ENCODE measurements at regions of chr19 and their contacts with region 1.

Region 1: DNA sequence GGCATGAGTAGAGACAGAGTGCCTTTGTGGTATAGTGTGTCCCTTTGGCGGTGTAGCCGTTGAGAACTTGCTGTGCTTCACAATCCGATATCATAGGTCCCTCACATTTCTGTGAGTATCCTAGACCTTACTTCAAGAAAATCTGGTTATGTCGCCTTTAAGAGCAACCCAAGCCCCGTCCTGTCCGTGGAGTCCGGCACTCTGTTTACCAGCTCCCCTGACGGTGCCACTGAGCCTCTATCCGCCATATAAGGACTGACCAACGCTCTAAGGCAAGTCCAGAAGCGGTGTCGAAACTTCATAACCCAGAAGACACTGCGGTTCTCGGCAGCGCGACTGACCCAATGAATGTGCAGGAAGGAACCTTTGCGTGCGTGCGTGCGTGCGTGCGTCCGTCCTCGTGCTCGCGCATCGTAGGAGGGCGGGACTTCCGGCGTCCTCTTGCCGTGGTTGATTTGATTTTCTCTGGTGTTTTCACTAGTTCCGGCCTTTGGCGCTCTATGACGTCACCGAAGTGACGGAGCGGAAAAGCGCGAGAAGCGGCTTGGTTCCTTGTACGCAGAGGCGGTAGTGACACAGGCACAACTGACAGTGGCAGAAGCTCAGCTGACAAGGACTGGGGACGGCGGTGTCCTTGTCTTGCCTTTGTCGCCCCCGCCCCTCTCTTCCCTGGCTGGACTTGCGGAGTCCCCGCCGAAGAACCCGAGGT is at the starts of genes TRAPPC2B and ZNF547:
- DNase-seq: peak; percentile 99 to 100
- ATAC-seq: peak; percentile 88 to 96 (median 90)
- H3K4me3 ChIP-seq: peak within 1 kb of the TSS; percentile 56
- H3K4me3 Mint-ChIP-seq: peak within 1 kb of the TSS; percentile 92
- H3K27ac ChIP-seq: peak within 1 kb of the TSS; percentile 93
- H3K27ac Mint-ChIP-seq: peak within 1 kb of the TSS; percentile 96 to 98
- H3K4me1 ChIP-seq: peaks cover 14% of the 10 kb centered on the region
- H3K4me1 Mint-ChIP-seq: peaks cover 18 to 19% of the 10 kb centered on the region in 2 donors
- H3K27me3 ChIP-seq: no peaks in the 10 kb centered on the region
- H3K27me3 Mint-ChIP-seq: no peaks in the 10 kb centered on the region
- CTCF ChIP-seq: no peak
- total RNA-seq, gene TRAPPC2B: 7.4 to 15.6 (median 13.7) TPM
- total RNA-seq, gene ZNF547: 0.48 to 1.2 (median 0.92) TPM

Region 2: DNA sequence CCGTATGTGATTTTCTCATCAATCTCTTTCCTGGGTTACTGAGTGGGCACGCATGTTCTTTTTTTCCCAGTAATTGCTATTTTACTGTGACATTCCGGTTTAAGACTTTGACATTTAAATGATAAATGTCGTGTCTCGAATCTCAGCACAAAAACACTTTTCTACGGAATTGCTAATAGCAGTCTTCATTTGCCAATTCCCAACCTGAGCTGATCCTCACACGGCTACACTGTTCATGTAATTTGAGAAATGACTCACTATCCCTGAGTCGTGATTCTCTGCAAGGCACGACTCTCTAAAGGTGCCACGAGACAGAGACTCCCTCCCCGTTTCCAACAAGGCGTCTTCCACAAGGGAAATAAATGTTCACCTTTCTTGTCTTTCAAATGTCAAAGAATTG is 332.0 kb before region 1 on chr19:
- intact Hi-C with region 1: no loop called
- DNase-seq: no peak
- ATAC-seq: no peak
- H3K4me3 ChIP-seq: no peak overlapping the region
- H3K4me3 Mint-ChIP-seq: no peak overlapping the region
- H3K27ac ChIP-seq: no peak overlapping the region
- H3K27ac Mint-ChIP-seq: no peak overlapping the region
- H3K4me1 ChIP-seq: no peaks in the 10 kb centered on the region
- H3K4me1 Mint-ChIP-seq: no peaks in the 10 kb centered on the region
- H3K27me3 ChIP-seq: no peaks in the 10 kb centered on the region
- H3K27me3 Mint-ChIP-seq: no peaks in the 10 kb centered on the region
- CTCF ChIP-seq: no peak

Region 3: DNA sequence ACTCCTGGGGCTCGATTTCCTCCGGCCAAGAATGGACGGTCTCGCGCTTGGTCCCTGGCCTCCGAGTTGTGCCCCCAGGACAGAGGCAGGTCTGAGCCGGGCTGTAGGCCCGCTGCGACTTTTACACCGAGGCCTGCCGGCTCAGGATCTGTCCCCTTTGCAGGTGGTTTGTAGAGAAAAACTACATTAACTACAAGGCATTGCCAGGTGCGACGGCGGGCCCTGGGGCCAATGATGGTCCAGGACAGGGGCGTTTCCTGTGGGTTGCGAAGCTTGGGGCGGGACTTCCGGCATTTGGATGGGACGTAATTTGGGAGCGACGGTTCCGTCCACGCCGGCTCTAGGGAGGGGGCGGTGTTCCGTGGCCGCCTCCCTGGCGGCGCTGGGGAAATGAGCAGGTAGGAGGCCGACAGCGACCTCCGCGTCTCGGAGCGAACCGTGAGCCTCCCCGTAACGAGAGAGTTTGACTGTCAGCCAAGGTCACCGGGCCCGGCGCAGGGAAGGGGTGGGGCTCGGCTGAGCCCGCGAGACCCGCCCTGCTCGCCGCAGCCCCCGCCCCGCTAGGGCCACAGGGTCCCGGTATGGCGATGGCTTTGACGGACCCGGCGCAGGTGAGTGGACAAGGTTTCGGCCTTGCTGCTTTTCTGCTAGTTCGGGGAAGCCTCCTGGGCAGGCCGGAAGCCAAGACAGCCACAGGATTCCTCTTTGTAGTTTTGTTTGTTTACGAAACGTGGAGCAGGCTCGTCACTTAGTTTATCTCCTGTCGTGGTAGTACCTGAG is 122.7 kb before region 1 on chr19 and contains the start of gene ZNF805:
- intact Hi-C with region 1: loop called (anchors 1 kb)
- DNase-seq: peak; percentile 89 to 98
- ATAC-seq: peak; percentile 92 to 97 (median 94)
- H3K4me3 ChIP-seq: peak within 1 kb of the TSS; percentile 78
- H3K4me3 Mint-ChIP-seq: peak within 1 kb of the TSS; percentile 95
- H3K27ac ChIP-seq: peak within 1 kb of the TSS; percentile 87
- H3K27ac Mint-ChIP-seq: peak within 1 kb of the TSS; percentile 94 to 96
- H3K4me1 ChIP-seq: peaks cover 22% of the 10 kb centered on the region
- H3K4me1 Mint-ChIP-seq: peaks cover 29 to 34% of the 10 kb centered on the region in 2 donors
- H3K27me3 ChIP-seq: no peaks in the 10 kb centered on the region
- H3K27me3 Mint-ChIP-seq: no peaks in the 10 kb centered on the region
- CTCF ChIP-seq: no peak
- total RNA-seq, gene ZNF805: 25.9 to 32.7 (median 31.0) TPM

Region 4: DNA sequence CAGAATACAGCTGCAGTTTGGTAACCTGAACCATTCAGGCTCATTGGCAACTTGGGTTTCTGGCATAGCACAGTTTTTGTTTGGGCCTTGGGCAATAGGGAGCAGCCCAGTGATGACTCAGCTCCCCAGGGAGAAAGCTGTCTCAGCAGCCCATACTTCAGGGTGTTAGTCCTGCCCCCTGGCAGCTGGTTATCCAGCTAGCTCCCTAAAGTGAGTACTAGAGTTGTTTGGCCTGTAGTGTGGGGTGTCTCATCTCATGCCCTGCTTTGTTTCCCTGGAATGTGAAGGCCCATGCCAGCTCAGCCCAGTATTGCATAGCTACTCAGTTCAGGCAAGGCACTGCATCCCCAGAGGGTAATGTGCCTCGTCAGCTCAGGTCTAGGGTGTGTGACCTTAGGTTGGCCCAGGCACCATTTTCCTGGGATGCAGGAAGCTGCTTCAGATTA is 61.1 kb before region 1 on chr19:
- intact Hi-C with region 1: no loop called
- DNase-seq: no peak
- ATAC-seq: peak in 1 of 3 donors; percentile 12
- H3K4me3 ChIP-seq: no peak overlapping the region
- H3K4me3 Mint-ChIP-seq: no peak overlapping the region
- H3K27ac ChIP-seq: no peak overlapping the region
- H3K27ac Mint-ChIP-seq: no peak overlapping the region
- H3K4me1 ChIP-seq: no peaks in the 10 kb centered on the region
- H3K4me1 Mint-ChIP-seq: peaks cover 13 to 16% of the 10 kb centered on the region in 2 donors
- H3K27me3 ChIP-seq: no peaks in the 10 kb centered on the region
- H3K27me3 Mint-ChIP-seq: no peaks in the 10 kb centered on the region
- CTCF ChIP-seq: no peak

Region 5: DNA sequence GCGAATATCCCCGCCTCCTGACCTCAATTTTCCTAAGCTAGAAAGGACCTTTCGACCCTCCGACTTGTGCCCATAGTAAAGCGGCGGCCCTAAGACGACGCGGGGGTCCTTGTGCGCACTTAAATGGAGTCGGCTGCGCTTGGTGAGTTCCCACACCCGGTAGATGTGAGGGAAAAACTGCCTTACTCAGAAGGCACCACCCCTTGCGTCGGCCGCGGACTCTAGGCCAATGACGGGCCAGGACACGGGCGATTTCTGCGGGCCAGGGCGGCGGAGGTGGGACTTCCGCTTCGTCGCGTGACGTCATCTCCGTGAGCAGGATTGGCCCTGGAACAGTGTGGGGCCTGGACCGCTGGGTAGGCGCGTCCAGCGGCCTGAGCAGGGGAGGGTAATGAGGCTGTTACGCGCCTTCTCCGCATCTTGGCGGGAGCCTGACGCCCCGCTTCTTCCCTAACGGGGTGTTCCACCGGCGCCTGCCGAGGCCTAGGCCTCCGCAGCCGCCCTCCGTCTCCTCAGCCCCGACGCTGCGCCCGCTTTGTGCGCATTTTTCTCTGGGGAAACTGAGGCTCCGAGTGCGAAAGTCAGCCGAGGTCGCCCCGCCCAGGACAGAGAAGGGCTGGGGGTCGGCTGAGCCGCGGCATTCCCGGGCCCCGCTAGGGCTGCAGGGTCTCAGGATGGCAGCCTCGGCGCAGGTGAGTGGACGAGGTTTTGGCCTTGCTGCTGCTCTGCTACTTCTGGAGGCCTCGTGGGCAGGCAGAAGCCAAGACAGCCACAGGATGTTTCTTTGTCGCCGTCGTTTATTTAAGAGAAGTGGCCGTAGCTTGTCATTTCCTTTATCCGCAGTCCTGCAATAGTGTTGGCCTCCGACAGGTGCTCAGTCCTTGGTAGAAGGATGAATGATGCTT is 42.7 kb before region 1 on chr19 and contains the start of gene ZNF543:
- intact Hi-C with region 1: no loop called
- DNase-seq: peak; percentile 94 to 96
- ATAC-seq: peak; percentile 95 to 99 (median 98)
- H3K4me3 ChIP-seq: peak within 1 kb of the TSS; percentile 81
- H3K4me3 Mint-ChIP-seq: peak within 1 kb of the TSS; percentile 94
- H3K27ac ChIP-seq: peak within 1 kb of the TSS; percentile 94
- H3K27ac Mint-ChIP-seq: peak within 1 kb of the TSS; percentile 95 to 99
- H3K4me1 ChIP-seq: peaks cover 24% of the 10 kb centered on the region
- H3K4me1 Mint-ChIP-seq: peaks cover 27 to 35% of the 10 kb centered on the region in 2 donors
- H3K27me3 ChIP-seq: peaks cover 13% of the 10 kb centered on the region
- H3K27me3 Mint-ChIP-seq: peaks cover 26% of the 10 kb centered on the region in 2 donors
- CTCF ChIP-seq: no peak
- total RNA-seq, gene ZNF543: 4.7 to 7.2 (median 5.9) TPM

Region 6: GRCh38 chr19:57389730-57390598 is 26.8 kb after region 1 on chr19 and contains the start of gene ZNF548:
- intact Hi-C with region 1: loop called (anchors 1 kb)
- DNase-seq: peak; percentile 99
- ATAC-seq: peak; percentile 90 to 98 (median 92)
- H3K4me3 ChIP-seq: peak within 1 kb of the TSS; percentile 81
- H3K4me3 Mint-ChIP-seq: peak within 1 kb of the TSS; percentile 94
- H3K27ac ChIP-seq: peak within 1 kb of the TSS; percentile 95
- H3K27ac Mint-ChIP-seq: peak within 1 kb of the TSS; percentile 97 to 98
- H3K4me1 ChIP-seq: peaks cover 23% of the 10 kb centered on the region
- H3K4me1 Mint-ChIP-seq: peaks cover 37 to 48% of the 10 kb centered on the region in 2 donors
- H3K27me3 ChIP-seq: no peaks in the 10 kb centered on the region
- H3K27me3 Mint-ChIP-seq: peaks cover 0 to 4% of the 10 kb centered on the region in 2 donors
- CTCF ChIP-seq: no peak
- total RNA-seq, gene ZNF548: 75.5 to 104 (median 96.9) TPM

Region 7: GRCh38 chr19:57410877-57411671 is 47.9 kb after region 1 on chr19 and contains the start of gene ZNF17:
- intact Hi-C with region 1: loop called (anchors 1 kb)
- DNase-seq: peak; percentile 84 to 96
- ATAC-seq: peak; percentile 99 to 100 (median 100)
- H3K4me3 ChIP-seq: peak within 1 kb of the TSS; percentile 86
- H3K4me3 Mint-ChIP-seq: peak within 1 kb of the TSS; percentile 94
- H3K27ac ChIP-seq: peak within 1 kb of the TSS; percentile 62
- H3K27ac Mint-ChIP-seq: peak within 1 kb of the TSS; percentile 84
- H3K4me1 ChIP-seq: peaks cover 18% of the 10 kb centered on the region
- H3K4me1 Mint-ChIP-seq: peaks cover 29 to 37% of the 10 kb centered on the region in 2 donors
- H3K27me3 ChIP-seq: no peaks in the 10 kb centered on the region
- H3K27me3 Mint-ChIP-seq: no peaks in the 10 kb centered on the region
- CTCF ChIP-seq: no peak
- total RNA-seq, gene ZNF17: 13.0 to 15.0 (median 13.3) TPM